ENCODE measurements at regions of chr1 and their contacts with region 1.

Region 1: DNA sequence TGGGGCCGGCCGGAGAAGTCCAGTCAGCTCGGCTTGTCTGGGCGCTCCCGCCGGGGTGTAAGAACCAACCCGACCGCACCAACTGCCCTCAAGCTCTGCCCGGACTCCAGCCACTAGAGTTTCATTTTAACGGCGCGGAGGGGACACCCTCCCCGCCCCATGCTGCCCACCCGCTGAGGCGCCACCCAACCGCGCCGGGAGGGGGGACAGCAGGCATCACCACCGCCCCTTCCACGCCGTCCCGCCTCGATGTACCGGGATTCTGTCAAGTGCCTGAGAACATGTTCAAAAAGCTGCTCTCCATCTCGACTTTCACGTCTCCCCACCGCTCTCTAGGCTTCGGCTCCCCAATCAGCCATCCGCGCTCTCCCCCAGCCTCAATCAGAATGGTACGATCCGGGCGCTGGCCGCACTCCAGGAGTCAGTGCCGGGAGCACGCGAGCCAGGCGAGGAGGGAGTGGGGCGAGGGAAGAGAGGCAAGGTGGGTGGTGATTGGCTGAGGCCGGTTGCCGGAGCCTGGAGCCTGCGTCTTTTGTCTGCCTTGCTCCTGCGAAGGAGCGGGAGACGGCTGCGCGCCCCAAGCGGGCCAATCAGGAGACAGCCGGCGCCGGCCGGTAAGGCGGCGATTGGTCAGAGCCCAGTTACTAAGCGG is at the start of gene PIK3R3:
- DNase-seq: peak; percentile 98 to 99 (median 99)
- ATAC-seq: peak; percentile 97 to 99 (median 98)
- H3K4me3 ChIP-seq: peak within 1 kb of the TSS; percentile 54 to 89 (median 74)
- H3K27ac ChIP-seq: peak within 1 kb of the TSS; percentile 89 to 98 (median 96)
- H3K4me1 ChIP-seq: peaks cover 4 to 52% (median 30%) of the 10 kb centered on the region in 12 donors
- H3K27me3 ChIP-seq: peaks cover 0 to 9% (median 0%) of the 10 kb centered on the region in 9 donors
- CTCF ChIP-seq: peak in 4 of 12 donors; percentile 8 to 41 (median 40)
- POLR2A ChIP-seq: peak; percentile 86 to 99
- total RNA-seq, gene PIK3R3: 24.6 to 54.1 (median 41.9) TPM

Region 2: DNA sequence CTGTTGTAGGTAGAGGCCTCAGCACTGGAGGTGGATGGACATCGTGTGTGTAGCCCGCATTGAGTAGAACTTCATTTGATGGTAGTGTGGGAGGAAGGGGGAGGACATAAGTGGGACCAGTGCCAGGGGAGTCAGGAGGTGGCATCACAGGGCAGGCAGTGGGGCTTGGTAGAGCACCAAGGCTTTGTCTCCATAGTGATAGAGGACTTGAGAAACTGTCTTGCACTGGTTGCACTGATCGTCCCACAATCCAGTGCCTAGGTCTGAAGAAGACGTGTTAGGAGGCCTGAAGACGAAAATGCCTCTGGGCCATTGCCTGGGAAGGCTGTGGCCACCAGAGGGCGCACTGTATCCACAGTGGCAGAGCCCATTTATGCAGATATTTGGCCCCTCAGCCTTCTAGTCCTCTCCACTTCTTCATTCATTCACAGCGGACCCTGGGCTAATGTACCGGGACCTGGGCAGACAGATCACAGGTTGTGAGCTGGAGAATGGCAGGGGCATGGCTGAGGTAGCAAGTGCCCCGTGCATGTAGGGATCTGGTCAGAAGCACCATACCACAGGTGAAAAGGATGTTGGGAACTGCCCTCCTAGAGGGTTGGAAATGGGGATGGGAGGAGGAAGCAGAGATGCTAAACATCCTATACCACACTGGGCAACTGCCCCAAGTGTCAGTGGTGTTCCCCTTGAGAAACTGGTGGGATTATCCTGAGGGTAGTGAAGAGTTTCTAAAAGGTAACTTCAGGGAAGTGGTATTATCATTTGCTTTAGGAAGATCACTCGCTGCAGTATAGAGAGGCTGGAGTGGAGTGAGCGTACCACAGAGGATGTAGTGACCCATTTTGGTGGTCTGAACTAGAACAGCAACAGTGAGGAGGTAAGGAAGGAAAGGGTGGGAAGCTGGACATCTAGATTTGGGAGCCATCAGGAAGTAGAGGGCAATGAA is 95.5 kb before region 1 on chr1:
- intact Hi-C with region 1: loop called in 7 of 10 experiments (anchors 2 to 5 kb)
- DNase-seq: peak; percentile 81 to 92 (median 85)
- ATAC-seq: peak; percentile 35 to 70 (median 59)
- H3K4me3 ChIP-seq: no peak overlapping the region
- H3K27ac ChIP-seq: peak overlapping the region in 9 of 12 donors; percentile 8 to 52 (median 35)
- H3K4me1 ChIP-seq: peaks cover 11 to 67% (median 39%) of the 10 kb centered on the region in 12 donors
- H3K27me3 ChIP-seq: no peaks in the 10 kb centered on the region
- CTCF ChIP-seq: peak; percentile 93 to 99 (median 97)
- POLR2A ChIP-seq: no peak

Region 3: GRCh38 chr1:46062651-46063319 is 69.9 kb before region 1 on chr1:
- intact Hi-C with region 1: loop called in 1 of 10 experiments (anchors 10 kb)
- DNase-seq: no peak
- ATAC-seq: peak in 1 of 4 donors; percentile 21
- H3K4me3 ChIP-seq: no peak overlapping the region
- H3K27ac ChIP-seq: peak overlapping the region in 2 of 12 donors; percentile 19 to 32
- H3K4me1 ChIP-seq: peaks cover 0 to 33% (median 0%) of the 10 kb centered on the region in 12 donors
- H3K27me3 ChIP-seq: no peaks in the 10 kb centered on the region
- CTCF ChIP-seq: no peak
- POLR2A ChIP-seq: no peak

Region 4: GRCh38 chr1:46166521-46167462 is 34.1 kb after region 1 on chr1:
- intact Hi-C with region 1: loop called in 7 of 10 experiments (anchors 1 to 5 kb)
- DNase-seq: peak; percentile 78 to 86 (median 84)
- ATAC-seq: peak; percentile 71 to 86 (median 76)
- H3K4me3 ChIP-seq: peak overlapping the region in 11 of 12 donors; percentile 10 to 63 (median 53)
- H3K27ac ChIP-seq: peak overlapping the region; percentile 74 to 98 (median 88)
- H3K4me1 ChIP-seq: peaks cover 0 to 56% (median 35%) of the 10 kb centered on the region in 12 donors
- H3K27me3 ChIP-seq: peaks cover 0 to 5% (median 0%) of the 10 kb centered on the region in 9 donors
- CTCF ChIP-seq: no peak
- POLR2A ChIP-seq: peak in 1 of 2 donors; percentile 24

Region 5: GRCh38 chr1:46179138-46180081 is 46.8 kb after region 1 on chr1:
- intact Hi-C with region 1: loop called in 4 of 10 experiments (anchors 1 to 5 kb)
- DNase-seq: peak in 4 of 5 donors; percentile 79 to 85 (median 84)
- ATAC-seq: peak; percentile 76 to 85 (median 82)
- H3K4me3 ChIP-seq: peak overlapping the region in 2 of 12 donors; percentile 0 to 18
- H3K27ac ChIP-seq: peak overlapping the region in 7 of 12 donors; percentile 12 to 65 (median 35)
- H3K4me1 ChIP-seq: peaks cover 0 to 57% (median 31%) of the 10 kb centered on the region in 12 donors
- H3K27me3 ChIP-seq: no peaks in the 10 kb centered on the region
- CTCF ChIP-seq: peak; percentile 83 to 95 (median 90)
- POLR2A ChIP-seq: no peak

Region 6: DNA sequence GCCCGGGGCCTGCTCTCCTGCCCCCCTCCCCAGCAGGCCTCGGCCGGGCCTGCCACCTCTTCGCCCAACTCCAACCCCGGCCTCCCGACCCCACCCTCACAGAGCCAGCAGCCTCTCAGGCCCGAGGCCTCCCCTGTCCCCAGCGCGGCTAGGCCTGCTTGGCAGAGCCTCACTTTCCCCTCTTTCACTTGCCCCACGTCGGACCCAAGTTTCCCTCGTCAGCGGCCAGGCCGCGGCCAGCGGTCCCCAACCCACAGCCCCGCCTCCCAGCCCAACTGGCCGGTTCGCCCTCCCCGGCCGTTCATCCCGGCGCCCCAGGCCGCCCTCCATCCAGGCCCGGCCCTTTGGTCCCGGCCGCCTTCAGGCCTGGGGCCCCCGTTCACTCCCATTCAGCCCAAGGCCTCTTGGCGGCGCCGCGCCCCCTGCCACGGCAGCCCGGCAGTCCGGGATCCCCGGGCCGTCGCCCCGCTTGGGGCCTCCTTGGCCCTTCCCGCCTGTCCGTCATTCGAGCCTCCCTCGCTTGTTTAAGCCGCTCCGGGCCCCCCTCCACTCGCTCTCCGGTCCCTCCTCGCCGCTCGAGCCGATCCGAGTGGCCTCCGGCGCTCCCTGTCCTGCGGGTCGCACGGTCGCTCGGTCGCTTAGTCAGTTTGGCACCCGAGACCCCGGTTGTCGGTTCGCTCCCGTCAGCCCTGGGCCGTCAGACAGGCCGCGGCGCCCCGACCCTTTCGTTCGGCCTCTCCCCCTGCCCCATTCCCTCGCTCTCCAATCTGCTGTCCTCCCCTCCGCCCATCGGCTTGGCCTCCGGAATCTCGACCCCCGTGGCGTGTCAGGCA is 169.4 kb after region 1 on chr1:
- intact Hi-C with region 1: no loop called
- DNase-seq: peak; percentile 50 to 76 (median 59)
- ATAC-seq: peak in 3 of 4 donors; percentile 4 to 24 (median 22)
- H3K4me3 ChIP-seq: peak overlapping the region; percentile 73 to 98 (median 90)
- H3K27ac ChIP-seq: peak overlapping the region; percentile 93 to 100 (median 98)
- H3K4me1 ChIP-seq: peaks cover 8 to 69% (median 53%) of the 10 kb centered on the region in 12 donors
- H3K27me3 ChIP-seq: no peaks in the 10 kb centered on the region
- CTCF ChIP-seq: peak in 5 of 12 donors; percentile 22 to 38 (median 30)
- POLR2A ChIP-seq: no peak

Region 7: GRCh38 chr1:46370214-46370633 is 237.6 kb after region 1 on chr1:
- intact Hi-C with region 1: no loop called
- DNase-seq: no peak
- ATAC-seq: peak in 2 of 4 donors; percentile 33 to 61
- H3K4me3 ChIP-seq: no peak overlapping the region
- H3K27ac ChIP-seq: peak overlapping the region in 1 of 12 donors; percentile 38
- H3K4me1 ChIP-seq: peaks cover 0 to 24% (median 0%) of the 10 kb centered on the region in 12 donors
- H3K27me3 ChIP-seq: no peaks in the 10 kb centered on the region
- CTCF ChIP-seq: no peak
- POLR2A ChIP-seq: no peak